ENCODE measurements at regions of chr1 and their contacts with region 1.

Region 1: DNA sequence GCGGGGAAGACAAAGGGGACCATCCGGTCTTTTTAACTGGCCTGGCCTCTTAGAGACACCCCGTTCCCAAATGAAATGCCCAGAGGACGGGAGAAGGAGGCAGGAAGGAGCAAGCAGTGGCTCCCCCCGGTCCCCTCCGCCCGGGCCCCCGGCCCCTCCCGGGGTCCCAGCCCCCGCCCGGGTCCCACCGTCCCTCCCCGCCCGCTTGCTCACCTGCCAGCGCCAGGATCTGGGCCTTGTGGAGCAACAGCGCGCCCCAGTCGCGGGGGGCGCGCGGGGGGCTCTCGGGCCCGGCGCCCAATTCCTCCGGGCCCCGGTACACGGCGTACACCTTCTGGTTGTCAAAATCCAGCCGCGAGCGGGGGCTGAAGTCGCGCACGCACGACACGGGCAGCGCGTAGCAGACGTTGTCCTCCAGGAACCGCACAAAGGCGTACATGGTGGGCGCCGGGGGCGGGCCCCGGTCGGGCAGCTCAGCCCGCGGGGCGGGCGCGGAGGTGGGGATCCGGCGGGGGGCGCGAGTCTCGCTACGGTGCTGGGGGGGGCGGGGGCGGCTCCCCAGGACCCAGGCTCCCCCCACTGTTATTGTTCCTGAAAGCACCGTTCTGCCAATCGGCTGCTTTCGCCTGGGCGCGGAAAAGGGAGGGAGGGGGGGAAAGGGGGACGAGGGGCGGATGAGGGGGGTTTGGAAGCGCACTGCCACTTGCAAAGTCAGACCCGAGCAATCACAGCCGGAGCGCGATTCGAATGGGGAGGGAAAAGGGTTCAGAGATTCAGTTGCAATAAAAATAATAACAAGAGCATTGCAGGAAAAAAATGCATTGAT is at the start of gene BEND5:
- DNase-seq: peak; percentile 82
- ATAC-seq: peak; percentile 80
- H3K4me3 ChIP-seq: peak within 1 kb of the TSS; percentile 59 to 85 (median 67)
- H3K4me3 Mint-ChIP-seq: peak within 1 kb of the TSS; percentile 97
- H3K27ac ChIP-seq: peak within 1 kb of the TSS; percentile 67 to 85
- H3K27ac Mint-ChIP-seq: peak within 1 kb of the TSS; percentile 95
- H3K4me1 ChIP-seq: peaks cover 59 to 63% of the 10 kb centered on the region in 2 donors
- H3K4me1 Mint-ChIP-seq: peaks cover 63% of the 10 kb centered on the region
- H3K27me3 ChIP-seq: no peaks in the 10 kb centered on the region
- H3K27me3 Mint-ChIP-seq: no peaks in the 10 kb centered on the region
- CTCF ChIP-seq: no peak
- total RNA-seq, gene BEND5: 15.5 and 19.5 TPM in 2 replicates

Region 2: GRCh38 chr1:48718116-48718630 is 58.4 kb before region 1 on chr1:
- CTCF ChIA-PET with region 1: no interaction called
- POLR2A ChIA-PET with region 1: no interaction called
- intact Hi-C with region 1: no loop called
- DNase-seq: no peak
- ATAC-seq: no peak
- H3K4me3 ChIP-seq: no peak overlapping the region
- H3K4me3 Mint-ChIP-seq: no peak overlapping the region
- H3K27ac ChIP-seq: no peak overlapping the region
- H3K27ac Mint-ChIP-seq: no peak overlapping the region
- H3K4me1 ChIP-seq: no peaks in the 10 kb centered on the region
- H3K4me1 Mint-ChIP-seq: no peaks in the 10 kb centered on the region
- H3K27me3 ChIP-seq: no peaks in the 10 kb centered on the region
- H3K27me3 Mint-ChIP-seq: no peaks in the 10 kb centered on the region
- CTCF ChIP-seq: no peak

Region 3: GRCh38 chr1:48750109-48750508 is 26.5 kb before region 1 on chr1:
- CTCF ChIA-PET with region 1: interaction called, 6 read pairs
- POLR2A ChIA-PET with region 1: interaction called, 3 read pairs
- intact Hi-C with region 1: loop called (anchors 1 kb)
- DNase-seq: peak; percentile 86
- ATAC-seq: peak; percentile 100
- H3K4me3 ChIP-seq: no peak overlapping the region
- H3K4me3 Mint-ChIP-seq: peak overlapping the region; percentile 7
- H3K27ac ChIP-seq: peak overlapping the region; percentile 36 to 74
- H3K27ac Mint-ChIP-seq: peak overlapping the region; percentile 83
- H3K4me1 ChIP-seq: peaks cover 38 to 41% of the 10 kb centered on the region in 2 donors
- H3K4me1 Mint-ChIP-seq: peaks cover 52% of the 10 kb centered on the region
- H3K27me3 ChIP-seq: no peaks in the 10 kb centered on the region
- H3K27me3 Mint-ChIP-seq: no peaks in the 10 kb centered on the region
- CTCF ChIP-seq: peak; percentile 83

Region 4: DNA sequence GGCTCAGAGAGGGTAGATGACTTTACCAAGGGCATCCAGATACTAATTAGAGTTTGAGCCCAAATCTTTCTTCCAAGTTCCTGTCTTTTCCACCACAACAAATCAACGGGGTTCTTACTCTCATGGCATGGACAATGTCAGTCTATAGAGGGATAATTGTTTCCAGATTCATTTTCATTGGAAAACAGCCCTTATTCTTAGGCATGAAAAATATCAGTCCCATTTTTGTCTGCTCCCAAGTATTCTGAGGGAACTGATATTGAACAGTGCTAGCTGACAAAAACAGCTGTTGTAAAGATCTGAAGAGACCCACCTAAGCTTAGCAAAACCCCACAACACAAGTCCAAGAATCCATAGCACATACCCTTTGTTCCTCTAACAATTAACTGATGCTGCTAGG is 349.1 kb after region 1 on chr1:
- CTCF ChIA-PET with region 1: no interaction called
- POLR2A ChIA-PET with region 1: no interaction called
- intact Hi-C with region 1: no loop called
- DNase-seq: no peak
- ATAC-seq: no peak
- H3K4me3 ChIP-seq: no peak overlapping the region
- H3K4me3 Mint-ChIP-seq: no peak overlapping the region
- H3K27ac ChIP-seq: no peak overlapping the region
- H3K27ac Mint-ChIP-seq: no peak overlapping the region
- H3K4me1 ChIP-seq: no peaks in the 10 kb centered on the region
- H3K4me1 Mint-ChIP-seq: no peaks in the 10 kb centered on the region
- H3K27me3 ChIP-seq: no peaks in the 10 kb centered on the region
- H3K27me3 Mint-ChIP-seq: peaks cover 8% of the 10 kb centered on the region
- CTCF ChIP-seq: no peak